T-cell (primary cell): ENCODE measurements at regions of chr16 and their contacts with region 1.

Region 1: DNA sequence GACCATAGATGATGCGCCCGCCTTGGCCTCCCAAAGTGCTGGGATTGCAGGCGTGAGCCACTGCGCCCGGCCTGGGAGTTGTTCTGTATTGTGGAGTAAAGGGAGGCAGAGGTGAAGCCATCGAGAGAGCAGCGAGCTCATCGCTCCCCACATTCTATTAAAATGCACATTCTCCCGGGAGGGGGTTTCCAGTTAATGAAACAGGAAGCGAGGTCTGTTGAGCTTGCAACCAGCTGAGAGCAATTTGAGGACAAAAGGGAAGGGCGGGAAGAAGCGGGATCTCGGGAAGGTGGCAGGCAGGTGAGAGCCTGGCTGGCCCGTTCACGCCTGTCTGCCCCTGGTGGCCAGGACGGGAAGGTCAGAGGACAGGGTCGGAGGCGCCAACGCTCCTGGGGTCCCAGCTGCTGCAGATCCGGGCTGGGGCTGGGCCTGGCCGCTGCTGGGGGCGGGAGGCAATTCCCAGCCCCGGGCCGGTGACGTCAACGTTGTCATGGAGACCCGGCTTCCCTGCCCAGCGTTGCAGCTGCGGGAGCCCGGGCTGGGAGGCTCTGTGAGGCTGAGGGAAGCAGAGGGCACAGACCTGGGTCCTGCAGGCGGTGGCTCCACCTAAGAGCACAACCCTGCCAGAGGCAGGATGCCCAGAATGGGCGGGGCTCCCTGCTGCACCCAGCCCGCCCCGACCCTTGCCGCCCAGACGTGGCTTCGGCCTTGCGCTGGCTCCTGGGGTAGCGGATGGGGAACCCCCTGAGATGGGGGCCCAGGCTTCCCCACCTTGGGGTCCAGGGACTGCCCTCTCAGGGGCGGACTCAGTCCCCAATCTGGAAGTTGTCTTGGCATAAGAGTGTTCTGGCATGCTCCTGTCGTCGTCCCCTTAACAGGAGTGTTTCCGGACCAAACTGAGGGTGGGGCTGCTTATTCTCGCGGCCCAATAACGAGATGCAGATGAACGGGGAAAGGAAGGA is 48.7 kb upstream of the PLCG2 start:
- DNase-seq: peak in 34 of 35 experiments; percentile 15 to 73 (median 48)
- ATAC-seq: peak; percentile 93 to 95 (median 95)
- H3K4me3 ChIP-seq: peak overlapping the region; percentile 49 to 57
- H3K4me3 Mint-ChIP-seq: peak overlapping the region; percentile 74 to 94 (median 84)
- H3K27ac ChIP-seq: peak overlapping the region; percentile 62
- H3K27ac Mint-ChIP-seq: peak overlapping the region; percentile 89 to 90
- H3K4me1 ChIP-seq: peaks cover 0 to 17% of the 10 kb centered on the region in 2 experiments
- H3K4me1 Mint-ChIP-seq: peaks cover 14 to 16% (median 14%) of the 10 kb centered on the region in 3 donors
- H3K27me3 ChIP-seq: no peaks in the 10 kb centered on the region
- H3K27me3 Mint-ChIP-seq: no peaks in the 10 kb centered on the region

Region 2: DNA sequence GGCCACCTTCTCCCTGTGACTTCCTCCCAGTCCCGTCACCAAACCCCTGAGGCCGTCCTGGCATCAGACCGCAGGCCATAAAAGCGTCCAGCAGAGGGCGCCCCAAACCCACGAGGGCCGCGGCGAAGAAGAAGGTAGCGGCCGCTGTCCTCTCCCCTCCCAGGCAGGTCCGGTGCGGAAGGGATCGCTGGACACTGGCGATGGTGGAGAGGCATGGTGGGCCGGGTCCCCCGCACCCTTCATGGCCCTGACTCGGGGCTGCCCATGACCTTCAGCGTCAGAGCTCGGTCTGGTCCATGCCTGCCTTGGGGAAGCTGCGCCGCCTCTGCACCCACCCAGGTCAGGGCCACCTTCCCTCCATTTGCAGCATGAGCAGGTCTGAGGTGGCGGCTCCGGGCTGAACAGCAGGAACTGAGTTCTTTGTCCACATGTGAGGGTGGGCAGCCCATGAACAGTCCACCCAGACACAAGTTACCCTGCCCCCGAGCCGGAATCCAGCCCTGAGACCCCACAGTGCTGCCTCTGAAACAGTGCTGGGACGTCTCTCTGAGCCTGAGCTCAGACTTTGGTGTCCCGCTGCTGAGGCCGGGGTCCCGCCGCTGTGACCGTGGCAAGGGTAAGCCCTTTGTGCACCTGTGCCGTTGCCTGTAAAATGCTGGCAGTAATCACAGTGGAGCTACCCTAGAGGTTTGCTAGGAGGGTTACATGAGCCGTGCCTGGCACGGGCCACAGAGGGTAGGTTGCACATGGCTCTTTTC is 326.6 kb before region 1 on chr16:
- CTCF ChIA-PET with region 1: interaction called in 1 of 2 experiments, 12 read pairs
- POLR2A ChIA-PET with region 1: no interaction called
- DNase-seq: peak; percentile 35 to 89 (median 73)
- ATAC-seq: peak; percentile 80 to 93 (median 88)
- H3K4me3 ChIP-seq: peak overlapping the region; percentile 27 to 40
- H3K4me3 Mint-ChIP-seq: peak overlapping the region in 2 of 3 donors; percentile 20 to 37
- H3K27ac ChIP-seq: no peak overlapping the region
- H3K27ac Mint-ChIP-seq: no peak overlapping the region
- H3K4me1 ChIP-seq: peaks cover 0 to 10% of the 10 kb centered on the region in 2 experiments
- H3K4me1 Mint-ChIP-seq: peaks cover 0 to 6% (median 0%) of the 10 kb centered on the region in 3 donors
- H3K27me3 ChIP-seq: peaks cover 0 to 5% of the 10 kb centered on the region in 2 experiments
- H3K27me3 Mint-ChIP-seq: no peaks in the 10 kb centered on the region

Region 3: DNA sequence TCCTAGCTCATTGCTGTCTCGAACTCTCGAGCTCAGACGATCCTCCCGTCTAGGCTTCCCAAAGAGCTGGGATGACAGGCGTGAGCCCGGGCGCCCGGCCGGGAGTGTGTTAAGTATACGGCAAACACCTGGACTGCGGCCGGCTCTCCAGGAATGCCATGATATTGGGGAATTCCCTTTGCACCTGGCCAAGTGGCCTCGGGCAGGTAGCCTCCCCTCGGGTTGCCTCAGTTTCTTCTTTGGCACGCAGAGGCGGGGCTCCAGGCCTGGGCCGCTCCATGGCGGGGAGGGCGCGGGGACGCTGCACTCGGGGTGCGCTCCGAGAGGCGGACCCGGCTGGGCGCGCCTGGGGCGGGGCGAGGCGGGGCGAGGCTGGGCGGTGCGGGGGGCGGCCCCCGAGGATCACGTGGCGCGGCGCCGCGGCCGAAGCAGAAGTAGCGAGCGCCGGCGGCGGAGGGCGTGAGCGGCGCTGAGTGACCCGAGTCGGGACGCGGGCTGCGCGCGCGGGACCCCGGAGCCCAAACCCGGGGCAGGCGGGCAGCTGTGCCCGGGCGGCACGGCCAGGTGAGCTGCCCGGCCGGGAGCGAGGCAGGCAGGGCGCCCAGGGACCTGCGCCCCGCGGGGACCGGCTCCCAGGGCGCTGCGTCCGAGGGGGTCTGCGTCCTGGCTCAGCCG is 48.6 kb after region 1 on chr16 and contains the start of gene PLCG2:
- CTCF ChIA-PET with region 1: no interaction called
- POLR2A ChIA-PET with region 1: no interaction called
- DNase-seq: peak; percentile 21 to 80 (median 58)
- ATAC-seq: peak; percentile 90 to 98 (median 94)
- H3K4me3 ChIP-seq: peak within 1 kb of the TSS; percentile 50 to 70
- H3K4me3 Mint-ChIP-seq: peak within 1 kb of the TSS; percentile 80 to 84 (median 82)
- H3K27ac ChIP-seq: no peak within 1 kb of the TSS
- H3K27ac Mint-ChIP-seq: peak within 1 kb of the TSS in 1 of 2 donors; percentile 42
- H3K4me1 ChIP-seq: peaks cover 0 to 18% of the 10 kb centered on the region in 2 experiments
- H3K4me1 Mint-ChIP-seq: peaks cover 13 to 20% (median 13%) of the 10 kb centered on the region in 3 donors
- H3K27me3 ChIP-seq: peaks cover 0 to 24% of the 10 kb centered on the region in 2 experiments
- H3K27me3 Mint-ChIP-seq: peaks cover 35 to 46% of the 10 kb centered on the region in 2 donors
- total RNA-seq, gene PLCG2: 7.5 to 27.1 (median 12.1) TPM

Region 4: DNA sequence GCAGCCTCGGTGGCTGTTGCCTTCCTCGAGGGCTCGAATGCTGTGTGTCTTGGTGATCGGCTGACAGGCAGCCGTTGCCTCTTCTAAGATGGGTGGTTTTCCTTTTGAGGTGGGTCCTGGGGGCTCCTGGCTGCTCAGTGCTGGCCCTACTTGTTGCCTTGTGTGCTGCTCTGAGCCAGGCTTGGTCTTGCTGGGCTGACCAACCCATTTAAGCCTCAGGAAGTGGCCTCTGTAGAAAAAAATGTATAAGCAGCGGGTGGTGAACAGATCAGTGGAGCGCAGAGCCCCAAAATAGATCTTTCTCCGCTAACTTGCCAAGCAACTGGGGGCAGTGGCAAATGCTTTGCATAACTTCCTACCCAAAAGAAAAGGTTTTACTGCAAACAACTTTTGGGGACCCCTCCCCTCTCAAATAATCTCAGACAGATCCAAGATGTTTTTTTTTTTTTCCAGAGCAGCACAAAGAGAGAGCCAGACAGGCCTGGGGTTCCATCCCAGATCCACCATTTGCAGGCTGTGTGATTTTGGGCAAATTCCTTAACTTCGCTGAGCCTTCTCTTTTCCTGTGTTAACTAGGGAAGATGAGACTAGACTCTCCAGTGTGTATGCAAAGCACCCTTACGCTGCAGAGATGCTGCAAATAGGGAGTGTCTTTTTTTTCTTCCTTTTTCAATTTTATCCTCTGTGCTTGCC is 91.2 kb after region 1 on chr16:
- CTCF ChIA-PET with region 1: no interaction called
- POLR2A ChIA-PET with region 1: no interaction called
- DNase-seq: no peak
- ATAC-seq: no peak
- H3K4me3 ChIP-seq: no peak overlapping the region
- H3K4me3 Mint-ChIP-seq: peak overlapping the region in 1 of 3 donors; percentile 24
- H3K27ac ChIP-seq: no peak overlapping the region
- H3K27ac Mint-ChIP-seq: peak overlapping the region in 1 of 2 donors; percentile 17
- H3K4me1 ChIP-seq: peaks cover 0 to 49% of the 10 kb centered on the region in 2 experiments
- H3K4me1 Mint-ChIP-seq: peaks cover 10 to 48% (median 12%) of the 10 kb centered on the region in 3 donors
- H3K27me3 ChIP-seq: peaks cover 0 to 3% of the 10 kb centered on the region in 2 experiments
- H3K27me3 Mint-ChIP-seq: peaks cover 0 to 2% of the 10 kb centered on the region in 2 donors